ENCODE measurements at regions of chrX and their contacts with region 1.

Region 1: DNA sequence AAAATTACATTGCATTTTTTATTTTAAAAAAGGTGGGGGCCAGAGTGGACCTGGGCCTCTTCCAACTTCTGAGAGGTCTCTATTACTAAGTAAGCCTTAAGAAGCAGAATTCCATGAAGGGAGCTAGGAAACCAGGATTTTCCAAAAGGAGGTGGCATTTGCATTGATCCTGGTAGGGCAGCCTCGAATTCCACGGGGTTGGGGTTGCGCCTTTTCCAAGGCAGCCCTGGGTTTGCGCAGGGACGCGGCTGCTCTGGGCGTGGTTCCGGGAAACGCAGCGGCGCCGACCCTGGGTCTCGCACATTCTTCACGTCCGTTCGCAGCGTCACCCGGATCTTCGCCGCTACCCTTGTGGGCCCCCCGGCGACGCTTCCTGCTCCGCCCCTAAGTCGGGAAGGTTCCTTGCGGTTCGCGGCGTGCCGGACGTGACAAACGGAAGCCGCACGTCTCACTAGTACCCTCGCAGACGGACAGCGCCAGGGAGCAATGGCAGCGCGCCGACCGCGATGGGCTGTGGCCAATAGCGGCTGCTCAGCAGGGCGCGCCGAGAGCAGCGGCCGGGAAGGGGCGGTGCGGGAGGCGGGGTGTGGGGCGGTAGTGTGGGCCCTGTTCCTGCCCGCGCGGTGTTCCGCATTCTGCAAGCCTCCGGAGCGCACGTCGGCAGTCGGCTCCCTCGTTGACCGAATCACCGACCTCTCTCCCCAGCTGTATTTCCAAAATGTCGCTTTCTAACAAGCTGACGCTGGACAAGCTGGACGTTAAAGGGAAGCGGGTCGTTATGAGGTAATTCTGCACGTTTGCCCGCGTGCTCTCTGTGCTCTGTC is at the start of gene PGK1:
- DNase-seq: peak; percentile 97
- H3K4me3 ChIP-seq: peak within 1 kb of the TSS; percentile 33 to 96 (median 71)
- H3K27ac ChIP-seq: peak within 1 kb of the TSS; percentile 94
- H3K4me1 ChIP-seq: peaks cover 33% of the 10 kb centered on the region
- H3K27me3 ChIP-seq: peaks cover 2 to 3% of the 10 kb centered on the region in 2 experiments
- CTCF ChIP-seq: no peak
- POLR2A ChIP-seq: peak; percentile 69
- total RNA-seq, gene PGK1: 377 and 392 TPM in 2 replicates

Region 2: DNA sequence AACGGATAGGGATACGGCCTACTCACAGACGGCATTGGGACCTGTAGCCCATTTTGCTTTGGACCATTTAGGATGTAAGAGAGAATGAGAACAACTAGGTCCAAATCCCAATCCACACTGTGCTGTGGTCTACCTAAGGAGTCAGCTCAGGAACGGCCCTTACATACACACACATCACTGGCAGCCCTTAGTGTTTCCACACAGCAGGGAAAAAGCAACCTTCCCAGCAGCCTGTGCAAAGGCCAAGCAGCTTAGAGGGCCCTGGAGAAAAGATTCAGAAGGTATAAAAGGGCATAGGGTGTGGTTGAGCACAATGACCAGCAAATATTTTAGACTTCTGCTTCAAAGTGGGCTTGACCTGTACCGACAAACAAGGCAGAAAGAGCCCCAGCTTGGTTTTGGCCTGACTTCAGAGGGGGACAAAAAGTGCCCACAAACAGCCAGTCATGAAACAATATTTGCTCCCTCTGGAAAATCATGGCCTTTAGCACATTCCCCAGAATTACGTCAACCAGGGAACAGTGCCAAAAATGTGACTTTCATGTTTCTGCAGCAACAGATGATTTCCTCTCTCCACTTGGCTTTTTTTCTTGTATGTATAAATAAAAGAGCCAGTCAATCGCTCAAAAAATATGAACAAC is 1016.2 kb before region 1 on chrX:
- CTCF ChIA-PET with region 1: no interaction called
- POLR2A ChIA-PET with region 1: no interaction called
- dilution Hi-C with region 1: no loop called
- intact Hi-C with region 1: loop called (anchors 10 kb)
- DNase-seq: peak; percentile 90
- H3K4me3 ChIP-seq: no peak overlapping the region
- H3K27ac ChIP-seq: peak overlapping the region; percentile 74
- H3K4me1 ChIP-seq: peaks cover 27% of the 10 kb centered on the region
- H3K27me3 ChIP-seq: no peaks in the 10 kb centered on the region
- CTCF ChIP-seq: no peak
- POLR2A ChIP-seq: no peak

Region 3: GRCh38 chrX:78139160-78140123 is 35.6 kb after region 1 on chrX and contains the start of gene TAF9B:
- CTCF ChIA-PET with region 1: no interaction called
- POLR2A ChIA-PET with region 1: no interaction called
- dilution Hi-C with region 1: no loop called
- intact Hi-C with region 1: loop called (anchors 2 kb)
- DNase-seq: peak; percentile 80
- H3K4me3 ChIP-seq: peak within 1 kb of the TSS; percentile 55 to 74 (median 57)
- H3K27ac ChIP-seq: peak within 1 kb of the TSS; percentile 64
- H3K4me1 ChIP-seq: no peaks in the 10 kb centered on the region
- H3K27me3 ChIP-seq: no peaks in the 10 kb centered on the region
- CTCF ChIP-seq: no peak
- POLR2A ChIP-seq: peak; percentile 55
- total RNA-seq, gene TAF9B: 16.0 and 18.5 TPM in 2 replicates

Measured in endothelial cell of umbilical vein (primary cell).